Activated CD4-positive, alpha-beta T cell treated with anti-CD3 and anti-CD28 coated beads, Interleukin-2, amount 10 ng/mL, durations not matched to agents 24 days and 14 days (primary cell): ENCODE measurements at regions of chr10 and their contacts with region 1.

Region 1: DNA sequence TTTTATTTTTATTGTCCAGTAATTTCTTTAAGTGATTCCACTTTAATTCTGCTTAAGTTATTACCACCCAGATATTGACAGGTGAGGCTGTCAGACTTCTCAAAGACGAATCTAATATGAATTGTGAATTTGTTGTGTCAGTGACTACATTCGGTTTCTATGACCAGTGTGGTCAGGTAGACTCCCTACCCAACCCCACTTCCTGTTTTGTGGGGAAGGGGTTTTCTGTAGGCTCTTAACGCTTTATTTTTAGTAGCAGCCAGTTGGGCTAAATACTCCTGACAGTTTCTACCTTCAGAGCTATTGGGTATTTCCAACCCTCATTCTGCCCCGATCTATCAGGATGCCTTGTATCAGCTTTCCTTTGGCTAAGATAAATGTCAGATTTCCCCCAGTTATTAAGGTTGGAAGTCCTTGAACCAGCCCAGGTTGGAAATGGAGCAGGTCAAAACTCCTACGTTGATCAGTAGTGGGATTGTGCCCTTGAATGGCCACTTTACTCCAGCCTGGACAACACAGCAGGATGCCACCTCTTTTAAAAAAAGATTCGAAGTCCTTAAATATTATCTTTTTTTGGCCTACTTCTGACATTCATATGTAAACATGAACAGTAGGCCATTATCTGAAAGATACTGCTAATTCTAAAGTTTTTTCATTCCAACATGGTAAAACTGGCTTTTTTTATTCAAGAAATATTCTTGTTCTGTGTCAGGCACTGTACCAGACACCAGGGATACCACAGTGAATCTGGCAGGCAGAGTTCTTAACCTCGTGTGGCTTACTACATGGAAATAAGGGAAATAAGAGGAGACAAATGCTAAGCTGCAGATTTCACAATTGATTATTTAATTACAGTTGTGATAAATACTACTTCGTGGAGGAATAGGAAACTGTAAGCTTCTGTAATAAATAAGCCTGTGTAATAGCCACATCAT is 133.3 kb upstream of the SAMD8 start:
- DNase-seq: peak; percentile 91
- H3K4me3 Mint-ChIP-seq: peak overlapping the region; percentile 71
- H3K27ac Mint-ChIP-seq: peak overlapping the region; percentile 91
- H3K4me1 Mint-ChIP-seq: peaks cover 47% of the 10 kb centered on the region
- H3K27me3 Mint-ChIP-seq: no peaks in the 10 kb centered on the region

Region 2: GRCh38 chr10:74898201-74898976 is 79.8 kb before region 1 on chr10:
- intact Hi-C with region 1: loop called (anchors 10 kb)
- DNase-seq: peak; percentile 79
- H3K4me3 Mint-ChIP-seq: peak overlapping the region; percentile 39
- H3K27ac Mint-ChIP-seq: peak overlapping the region; percentile 78
- H3K4me1 Mint-ChIP-seq: peaks cover 37% of the 10 kb centered on the region
- H3K27me3 Mint-ChIP-seq: no peaks in the 10 kb centered on the region

Region 3: GRCh38 chr10:75012471-75012870 is 34.3 kb after region 1 on chr10:
- intact Hi-C with region 1: loop called (anchors 2 kb)
- DNase-seq: no peak
- H3K4me3 Mint-ChIP-seq: no peak overlapping the region
- H3K27ac Mint-ChIP-seq: peak overlapping the region; percentile 29
- H3K4me1 Mint-ChIP-seq: peaks cover 37% of the 10 kb centered on the region
- H3K27me3 Mint-ChIP-seq: no peaks in the 10 kb centered on the region